ENCODE measurements at regions of chr4 and their contacts with region 1.

Region 1: DNA sequence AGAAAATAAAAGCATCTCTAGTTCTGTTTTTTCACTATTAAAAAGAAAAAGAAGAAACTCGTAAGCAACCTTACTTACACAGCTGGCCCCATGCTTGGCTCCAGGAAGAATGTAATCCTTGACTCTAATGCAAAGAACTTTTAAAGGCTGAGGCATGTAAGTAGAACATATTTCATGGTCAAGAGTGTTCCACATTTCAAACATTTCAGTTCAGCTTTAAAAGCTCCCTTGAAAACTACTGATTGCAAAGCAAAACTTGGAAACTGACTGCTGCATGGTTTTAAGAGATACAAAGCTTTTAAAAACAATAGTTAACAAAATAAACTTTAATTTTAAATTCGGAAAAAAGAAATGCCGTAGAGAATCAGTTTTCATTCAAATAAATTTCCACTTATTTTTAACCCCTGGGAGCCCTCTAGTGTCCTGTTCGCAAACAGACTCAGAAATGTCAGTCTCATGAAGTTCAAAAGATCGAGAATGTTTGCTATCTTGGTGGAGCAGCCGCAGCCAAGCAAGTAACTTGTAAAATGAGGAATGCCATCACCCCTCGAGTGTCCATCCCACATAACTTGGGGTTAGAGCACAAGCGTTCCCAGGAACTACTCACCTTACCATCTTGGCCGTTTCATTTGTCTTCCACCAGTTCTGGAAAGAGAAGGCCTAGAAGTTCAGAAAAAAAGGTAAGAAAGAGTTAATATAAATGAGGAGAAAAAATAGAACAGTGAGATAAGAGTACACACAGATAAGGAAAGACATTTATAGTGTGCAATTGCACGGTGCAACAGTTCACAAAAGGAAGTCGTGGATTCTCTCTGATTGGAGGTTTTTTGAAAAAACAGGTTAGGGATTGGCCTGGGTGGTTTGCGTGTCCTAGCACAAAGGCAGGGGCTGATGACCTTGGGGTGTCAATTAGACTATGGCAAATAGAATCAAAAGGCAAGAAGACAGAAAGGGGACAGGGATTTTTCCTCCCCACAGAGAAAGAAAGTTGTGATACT is at the start of gene GASK1B:
- DNase-seq: no peak
- ATAC-seq: peak; percentile 65
- H3K4me3 ChIP-seq: no peak within 1 kb of the TSS
- H3K27ac ChIP-seq: no peak within 1 kb of the TSS
- H3K4me1 ChIP-seq: no peaks in the 10 kb centered on the region
- H3K27me3 ChIP-seq: peaks cover 0 to 4% of the 10 kb centered on the region in 2 experiments; a peak in 2 of 4 replicates
- CTCF ChIP-seq: peak; percentile 45 to 48 (median 45); a peak in 5 of 6 replicates
- EP300 ChIP-seq: no peak
- POLR2A ChIP-seq: no peak
- RAD21 ChIP-seq: peak; percentile 59
- polyA plus RNA-seq, gene GASK1B: 0.02 TPM in 1 of 2 experiments, not detected in the other

Region 2: GRCh38 chr4:157992038-157992705 is 180.4 kb before region 1 on chr4:
- CTCF ChIA-PET with region 1: interaction called, 9 read pairs
- POLR2A ChIA-PET with region 1: no interaction called
- RAD21 ChIA-PET with region 1: interaction called, 5 read pairs
- SMC1A ChIA-PET with region 1: interaction called, 6 read pairs
- in situ Hi-C with region 1: loop called (anchors 5 kb)
- intact Hi-C with region 1: loop called (anchors 1 kb)
- DNase-seq: no peak
- ATAC-seq: peak; percentile 58
- H3K4me3 ChIP-seq: no peak overlapping the region
- H3K27ac ChIP-seq: no peak overlapping the region
- H3K4me1 ChIP-seq: no peaks in the 10 kb centered on the region
- H3K27me3 ChIP-seq: no peaks in the 10 kb centered on the region
- CTCF ChIP-seq: peak; percentile 48 to 59 (median 52)
- EP300 ChIP-seq: no peak
- POLR2A ChIP-seq: no peak
- RAD21 ChIP-seq: peak; percentile 67